ENCODE measurements at regions of chr22 and their contacts with region 1.

Region 1: DNA sequence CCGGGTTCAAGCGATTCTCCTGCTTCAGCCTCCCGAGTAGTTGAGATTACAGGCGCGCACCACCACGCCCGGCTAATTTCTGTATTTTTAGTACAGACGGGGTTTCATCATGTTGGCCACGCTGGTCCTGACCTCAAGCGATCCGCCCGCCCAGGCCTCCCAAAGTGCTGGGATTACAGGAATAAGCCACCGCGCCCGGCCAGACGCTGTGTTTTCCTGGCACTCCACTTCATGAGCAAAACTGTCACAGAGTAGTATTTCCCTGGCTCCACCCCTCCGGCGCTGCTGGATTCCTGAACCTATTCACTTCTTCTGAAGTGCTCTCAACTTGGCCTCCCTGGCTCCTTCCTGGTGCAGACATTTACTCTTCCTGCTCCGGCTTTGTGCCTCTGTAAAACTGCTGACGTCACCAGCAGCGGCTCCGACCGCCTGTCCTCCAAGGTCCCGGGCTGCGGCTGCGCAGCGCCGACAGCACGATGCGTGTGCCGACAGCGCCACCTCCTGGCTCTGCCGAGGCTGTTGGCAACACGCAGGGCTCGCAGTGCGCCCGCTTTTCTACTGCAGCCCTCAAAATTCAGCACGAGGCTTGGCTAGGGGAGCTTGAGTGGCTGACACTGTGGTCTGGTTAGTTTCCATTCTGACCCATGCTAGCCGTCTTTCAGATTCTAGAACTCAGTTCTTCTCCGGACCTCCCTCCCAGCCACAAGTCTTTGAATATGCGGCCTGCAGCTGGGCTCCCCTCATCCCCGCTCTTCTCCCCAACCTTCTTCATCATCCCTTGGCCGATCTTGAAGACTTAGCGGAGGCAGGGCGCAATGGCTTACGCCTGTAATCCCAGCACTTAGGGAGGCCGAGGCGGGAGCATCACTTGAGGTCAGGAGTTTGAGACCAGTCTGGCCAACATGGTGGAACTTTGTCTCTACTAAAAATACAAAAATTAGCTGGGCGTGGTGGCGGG is 36.6 kb downstream of the APOL3 start:
- DNase-seq: peak; percentile 98

Region 2: GRCh38 chr22:35430897-35431322 is 693.0 kb before region 1 on chr22:
- intact Hi-C with region 1: loop called in 1 of 2 experiments (anchors 10 kb)
- DNase-seq: peak; percentile 95

Region 3: GRCh38 chr22:35914665-35915476 is 209.1 kb before region 1 on chr22:
- intact Hi-C with region 1: loop called in 1 of 2 experiments (anchors 5 kb)
- DNase-seq: no peak